CD8-positive, alpha-beta T cell (primary cell): ENCODE measurements at regions of chr20 and their contacts with region 1.

Region 1: GRCh38 chr20:38073307-38074071 is 39.9 kb downstream of the RPRD1B start:
- DNase-seq: peak in 3 of 9 experiments; percentile 11 to 59 (median 48)
- ATAC-seq: peak; percentile 51
- H3K4me3 ChIP-seq: no peak overlapping the region
- H3K4me3 Mint-ChIP-seq: no peak overlapping the region
- H3K27ac ChIP-seq: no peak overlapping the region
- H3K27ac Mint-ChIP-seq: peak overlapping the region; percentile 42
- H3K4me1 ChIP-seq: no peaks in the 10 kb centered on the region
- H3K4me1 Mint-ChIP-seq: peaks cover 25% of the 10 kb centered on the region
- H3K27me3 ChIP-seq: no peaks in the 10 kb centered on the region
- H3K27me3 Mint-ChIP-seq: no peaks in the 10 kb centered on the region
- CTCF ChIP-seq: peak; percentile 63

Region 2: DNA sequence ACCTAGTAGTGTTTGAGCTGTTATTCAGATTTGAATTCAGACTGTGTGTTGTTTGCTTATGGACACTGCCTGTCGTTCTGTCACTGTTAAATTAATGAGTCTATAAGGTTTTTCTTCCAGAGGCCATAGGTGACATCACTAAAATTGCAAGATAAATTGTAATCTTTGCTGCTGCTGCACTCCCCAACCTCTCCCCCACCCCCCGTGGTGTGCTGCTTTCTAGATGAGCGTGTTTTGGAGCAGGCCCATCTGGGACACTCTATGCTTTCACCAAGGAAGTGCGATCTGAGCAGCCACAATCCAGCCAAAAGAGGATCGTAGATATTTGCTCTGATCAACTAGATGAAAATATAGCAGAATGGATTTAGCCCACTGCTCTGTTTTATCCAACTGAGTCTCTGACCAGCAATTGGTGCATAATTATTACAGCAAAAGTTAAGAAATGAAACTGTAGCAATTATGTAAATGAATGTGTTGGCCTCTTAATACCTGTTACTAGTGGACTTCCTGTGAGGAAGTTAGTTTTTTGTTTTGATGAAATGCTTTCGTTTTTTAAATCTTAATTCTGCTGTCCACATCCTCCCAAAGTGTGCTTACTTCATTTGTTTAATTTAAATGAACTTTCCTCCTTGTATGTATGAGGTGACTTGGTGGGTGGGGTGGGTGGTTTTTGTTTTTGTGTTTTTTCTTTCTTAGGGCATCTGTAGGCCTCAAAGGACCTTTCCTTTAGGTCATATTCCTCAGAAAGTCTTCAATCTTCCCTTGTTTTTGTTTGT is 18.1 kb after region 1 on chr20:
- CTCF ChIA-PET with region 1: interaction called, 10 read pairs
- POLR2A ChIA-PET with region 1: no interaction called
- intact Hi-C with region 1: no loop called
- DNase-seq: peak in 2 of 9 experiments; percentile 11 to 40
- ATAC-seq: peak; percentile 25
- H3K4me3 ChIP-seq: no peak overlapping the region
- H3K4me3 Mint-ChIP-seq: peak overlapping the region; percentile 45
- H3K27ac ChIP-seq: peak overlapping the region in 1 of 2 experiments; percentile 65
- H3K27ac Mint-ChIP-seq: peak overlapping the region; percentile 55
- H3K4me1 ChIP-seq: no peaks in the 10 kb centered on the region
- H3K4me1 Mint-ChIP-seq: peaks cover 32% of the 10 kb centered on the region
- H3K27me3 ChIP-seq: no peaks in the 10 kb centered on the region
- H3K27me3 Mint-ChIP-seq: no peaks in the 10 kb centered on the region
- CTCF ChIP-seq: no peak

Region 3: GRCh38 chr20:38165089-38165989 is 91.8 kb after region 1 on chr20 and contains the start of gene TGM2:
- CTCF ChIA-PET with region 1: no interaction called
- POLR2A ChIA-PET with region 1: no interaction called
- intact Hi-C with region 1: loop called in 1 of 2 experiments (anchors 5 kb)
- DNase-seq: peak in 7 of 9 experiments; percentile 6 to 61 (median 33)
- ATAC-seq: peak; percentile 67
- H3K4me3 ChIP-seq: no peak within 1 kb of the TSS
- H3K4me3 Mint-ChIP-seq: no peak within 1 kb of the TSS
- H3K27ac ChIP-seq: no peak within 1 kb of the TSS
- H3K27ac Mint-ChIP-seq: no peak within 1 kb of the TSS
- H3K4me1 ChIP-seq: no peaks in the 10 kb centered on the region
- H3K4me1 Mint-ChIP-seq: peaks cover 3% of the 10 kb centered on the region
- H3K27me3 ChIP-seq: peaks cover 6% of the 10 kb centered on the region in 2 experiments
- H3K27me3 Mint-ChIP-seq: peaks cover 34% of the 10 kb centered on the region
- CTCF ChIP-seq: peak; percentile 18
- total RNA-seq, gene TGM2: not detected